Activated CD8-positive, alpha-beta T cell treated with anti-CD3 and anti-CD28 coated beads for 36 hours (primary cell): ENCODE measurements at regions of chr6 and their contacts with region 1.

Region 1: GRCh38 chr6:43308101-43308989 is at the start of gene CRIP3:
- DNase-seq: peak; percentile 68
- ATAC-seq: peak; percentile 90
- H3K4me3 Mint-ChIP-seq: peak within 1 kb of the TSS; percentile 74
- H3K27ac Mint-ChIP-seq: no peak within 1 kb of the TSS
- H3K4me1 Mint-ChIP-seq: peaks cover 8% of the 10 kb centered on the region
- H3K27me3 Mint-ChIP-seq: peaks cover 3% of the 10 kb centered on the region
- CTCF ChIP-seq: peak; percentile 49
- total RNA-seq, gene CRIP3: 2.2 to 2.4 TPM

Region 2: DNA sequence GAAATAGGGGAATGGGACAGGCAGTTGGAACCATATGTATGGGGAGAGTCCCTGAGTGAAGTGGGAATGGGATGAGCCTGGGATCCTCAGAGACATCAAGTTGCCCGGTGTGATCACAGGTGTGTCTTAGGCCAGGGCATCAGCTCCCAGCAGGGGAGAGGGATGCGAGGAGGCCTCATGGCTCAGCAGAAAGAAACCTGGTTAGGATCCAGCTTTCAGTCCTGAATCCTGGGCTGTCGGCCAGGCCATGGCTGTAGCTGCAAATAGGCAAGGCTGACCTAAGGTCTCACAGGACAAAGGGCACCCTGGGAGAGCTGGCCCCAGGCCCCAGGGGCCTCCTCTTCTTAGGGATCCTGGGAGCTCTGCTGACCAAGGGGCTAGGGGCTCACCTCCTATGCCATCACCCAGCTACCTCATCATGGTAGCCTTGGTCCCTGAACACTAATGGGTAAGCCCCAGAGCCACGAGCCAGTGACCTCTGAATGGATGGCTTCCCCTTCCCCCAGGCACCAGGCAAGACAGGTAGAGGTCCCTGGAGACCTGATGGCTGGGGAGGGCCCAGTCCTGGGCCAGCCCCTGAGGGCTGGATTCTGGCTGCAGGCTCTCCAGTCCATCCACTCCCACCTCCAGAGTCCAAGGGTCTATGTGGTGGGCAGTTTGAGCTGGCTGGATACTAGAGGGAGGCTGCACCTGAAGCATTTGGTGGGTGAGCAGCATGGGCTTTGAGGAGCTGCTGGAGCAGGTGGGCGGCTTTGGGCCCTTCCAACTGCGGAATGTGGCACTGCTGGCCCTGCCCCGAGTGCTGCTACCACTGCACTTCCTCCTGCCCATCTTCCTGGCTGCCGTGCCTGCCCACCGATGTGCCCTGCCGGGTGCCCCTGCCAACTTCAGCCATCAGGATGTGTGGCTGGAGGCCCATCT is 10.4 kb before region 1 on chr6 and contains the start of gene SLC22A7:
- CTCF ChIA-PET with region 1: interaction called, 25 read pairs
- POLR2A ChIA-PET with region 1: no interaction called
- intact Hi-C with region 1: no loop called
- DNase-seq: no peak
- ATAC-seq: no peak
- H3K4me3 Mint-ChIP-seq: no peak within 1 kb of the TSS
- H3K27ac Mint-ChIP-seq: no peak within 1 kb of the TSS
- H3K4me1 Mint-ChIP-seq: no peaks in the 10 kb centered on the region
- H3K27me3 Mint-ChIP-seq: peaks cover 2% of the 10 kb centered on the region
- CTCF ChIP-seq: no peak
- total RNA-seq, gene SLC22A7: not detected

Region 3: GRCh38 chr6:43325876-43326275 is 17.5 kb after region 1 on chr6:
- CTCF ChIA-PET with region 1: interaction called, 11 read pairs
- POLR2A ChIA-PET with region 1: no interaction called
- intact Hi-C with region 1: no loop called
- DNase-seq: no peak
- ATAC-seq: no peak
- H3K4me3 Mint-ChIP-seq: no peak overlapping the region
- H3K27ac Mint-ChIP-seq: no peak overlapping the region
- H3K4me1 Mint-ChIP-seq: no peaks in the 10 kb centered on the region
- H3K27me3 Mint-ChIP-seq: no peaks in the 10 kb centered on the region
- CTCF ChIP-seq: no peak